Activated naive CD8-positive, alpha-beta T cell treated with anti-CD3 and anti-CD28 coated beads, Interleukin-2, amount 10 ng/mL, durations not matched to agents 7 days and 5 days (primary cell): ENCODE measurements at regions of chr6 and their contacts with region 1.

Region 1: GRCh38 chr6:31739639-31740396 is at the start of gene MSH5:
- DNase-seq: peak; percentile 96
- ATAC-seq: peak; percentile 82
- H3K4me3 Mint-ChIP-seq: peak within 1 kb of the TSS; percentile 98
- H3K27ac Mint-ChIP-seq: peak within 1 kb of the TSS; percentile 93
- H3K4me1 Mint-ChIP-seq: peaks cover 50% of the 10 kb centered on the region
- H3K27me3 Mint-ChIP-seq: no peaks in the 10 kb centered on the region
- total RNA-seq, gene MSH5: 59.2 to 68.2 TPM

Region 2: GRCh38 chr6:30635834-30636233 is 1104.0 kb before region 1 on chr6:
- POLR2A ChIA-PET with region 1: no interaction called
- DNase-seq: no peak
- ATAC-seq: no peak
- H3K4me3 Mint-ChIP-seq: no peak overlapping the region
- H3K27ac Mint-ChIP-seq: no peak overlapping the region
- H3K4me1 Mint-ChIP-seq: peaks cover 4% of the 10 kb centered on the region
- H3K27me3 Mint-ChIP-seq: no peaks in the 10 kb centered on the region

Region 3: GRCh38 chr6:31016659-31017299 is 723.0 kb before region 1 on chr6:
- POLR2A ChIA-PET with region 1: no interaction called
- DNase-seq: no peak
- ATAC-seq: no peak
- H3K4me3 Mint-ChIP-seq: no peak overlapping the region
- H3K27ac Mint-ChIP-seq: no peak overlapping the region
- H3K4me1 Mint-ChIP-seq: no peaks in the 10 kb centered on the region
- H3K27me3 Mint-ChIP-seq: peaks cover 22% of the 10 kb centered on the region

Region 4: DNA sequence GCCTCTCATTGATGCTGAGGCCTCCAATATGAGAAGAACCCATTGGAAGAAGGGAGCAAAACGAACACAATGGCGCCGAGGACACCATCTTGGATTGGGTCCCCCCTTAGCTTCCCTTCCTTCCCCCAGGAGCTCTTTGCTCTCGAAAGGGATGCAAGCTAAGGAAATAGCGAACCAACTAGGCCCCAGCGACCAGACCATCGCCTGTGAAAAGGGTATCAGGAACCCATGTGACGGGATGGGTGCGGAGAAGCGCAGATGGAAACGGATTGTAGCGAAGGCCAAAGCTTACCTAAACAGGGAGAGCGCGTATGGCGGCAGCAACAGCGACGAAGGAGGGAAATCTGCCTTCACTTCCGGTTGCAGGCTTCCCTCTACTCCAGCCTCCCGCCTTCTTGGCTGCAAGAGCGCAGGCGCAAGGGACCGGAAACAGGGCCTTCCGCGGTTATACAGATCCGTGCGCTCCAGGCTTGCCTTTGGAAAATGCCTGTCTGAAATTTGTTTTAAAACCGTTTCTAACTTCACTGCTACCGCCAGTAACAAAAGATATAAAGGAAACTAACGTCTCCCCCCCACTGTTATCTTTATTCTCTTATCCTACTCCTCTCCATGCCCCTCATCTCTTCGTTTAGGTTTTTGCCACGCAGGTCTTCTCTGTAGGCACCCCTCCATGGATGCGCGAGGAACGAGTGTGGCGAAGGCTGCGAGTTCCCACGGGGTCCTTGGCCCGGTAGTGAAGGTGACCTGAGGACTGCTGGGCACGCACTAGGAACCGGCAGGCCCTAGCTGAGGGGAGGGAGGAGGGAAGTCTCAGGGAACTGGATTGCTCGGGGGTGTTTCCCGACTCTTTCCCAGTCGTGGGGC is 197.9 kb before region 1 on chr6 and contains the start of gene DDX39B:
- POLR2A ChIA-PET with region 1: interaction called, 14 read pairs
- DNase-seq: peak; percentile 89
- ATAC-seq: peak; percentile 80
- H3K4me3 Mint-ChIP-seq: peak within 1 kb of the TSS; percentile 95
- H3K27ac Mint-ChIP-seq: peak within 1 kb of the TSS; percentile 91
- H3K4me1 Mint-ChIP-seq: peaks cover 37% of the 10 kb centered on the region
- H3K27me3 Mint-ChIP-seq: no peaks in the 10 kb centered on the region
- total RNA-seq, gene DDX39B: 531 to 555 TPM

Region 5: GRCh38 chr6:31660381-31661261 is 79.2 kb before region 1 on chr6 and contains the start of gene C6orf47:
- POLR2A ChIA-PET with region 1: interaction called, 25 read pairs
- DNase-seq: peak; percentile 88
- ATAC-seq: peak; percentile 69
- H3K4me3 Mint-ChIP-seq: peak within 1 kb of the TSS; percentile 92
- H3K27ac Mint-ChIP-seq: peak within 1 kb of the TSS; percentile 89
- H3K4me1 Mint-ChIP-seq: peaks cover 56% of the 10 kb centered on the region
- H3K27me3 Mint-ChIP-seq: no peaks in the 10 kb centered on the region
- total RNA-seq, gene C6orf47: 30.7 to 32.2 TPM

Region 6: GRCh38 chr6:31702819-31703522 is 36.8 kb before region 1 on chr6 and contains the start of gene ABHD16A:
- POLR2A ChIA-PET with region 1: interaction called, 34 read pairs
- DNase-seq: peak; percentile 97
- ATAC-seq: peak; percentile 94
- H3K4me3 Mint-ChIP-seq: peak within 1 kb of the TSS; percentile 97
- H3K27ac Mint-ChIP-seq: peak within 1 kb of the TSS; percentile 94
- H3K4me1 Mint-ChIP-seq: peaks cover 20% of the 10 kb centered on the region
- H3K27me3 Mint-ChIP-seq: no peaks in the 10 kb centered on the region
- total RNA-seq, gene ABHD16A: 57.8 to 64.0 TPM

Region 7: GRCh38 chr6:31769684-31770371 is 30.0 kb after region 1 on chr6:
- POLR2A ChIA-PET with region 1: interaction called, 57 read pairs
- DNase-seq: peak; percentile 86
- ATAC-seq: peak; percentile 82
- H3K4me3 Mint-ChIP-seq: no peak overlapping the region
- H3K27ac Mint-ChIP-seq: peak overlapping the region; percentile 6
- H3K4me1 Mint-ChIP-seq: peaks cover 23% of the 10 kb centered on the region
- H3K27me3 Mint-ChIP-seq: no peaks in the 10 kb centered on the region

Region 8: GRCh38 chr6:31815025-31815838 is 75.4 kb after region 1 on chr6 and contains the starts of genes HSPA1A and HSPA1L:
- POLR2A ChIA-PET with region 1: interaction called, 33 read pairs
- DNase-seq: peak; percentile 74
- ATAC-seq: peak; percentile 40
- H3K4me3 Mint-ChIP-seq: peak within 1 kb of the TSS; percentile 94
- H3K27ac Mint-ChIP-seq: peak within 1 kb of the TSS; percentile 87
- H3K4me1 Mint-ChIP-seq: peaks cover 19% of the 10 kb centered on the region
- H3K27me3 Mint-ChIP-seq: no peaks in the 10 kb centered on the region
- total RNA-seq, gene HSPA1A: 62.2 to 63.5 TPM
- total RNA-seq, gene HSPA1L: 3.3 to 4.5 TPM

Region 9: GRCh38 chr6:32655203-32655710 is 915.4 kb after region 1 on chr6:
- POLR2A ChIA-PET with region 1: no interaction called
- DNase-seq: no peak
- ATAC-seq: no peak
- H3K4me3 Mint-ChIP-seq: no peak overlapping the region
- H3K27ac Mint-ChIP-seq: no peak overlapping the region
- H3K4me1 Mint-ChIP-seq: peaks cover 10% of the 10 kb centered on the region
- H3K27me3 Mint-ChIP-seq: peaks cover 3% of the 10 kb centered on the region